Cardiac septum (tissue), 1 donor: ENCODE measurements at regions of chr14 and their contacts with region 1.

Region 1: GRCh38 chr14:60051721-60052221 is 40.0 kb upstream of the PCNX4 start:
- DNase-seq: no peak

Region 2: DNA sequence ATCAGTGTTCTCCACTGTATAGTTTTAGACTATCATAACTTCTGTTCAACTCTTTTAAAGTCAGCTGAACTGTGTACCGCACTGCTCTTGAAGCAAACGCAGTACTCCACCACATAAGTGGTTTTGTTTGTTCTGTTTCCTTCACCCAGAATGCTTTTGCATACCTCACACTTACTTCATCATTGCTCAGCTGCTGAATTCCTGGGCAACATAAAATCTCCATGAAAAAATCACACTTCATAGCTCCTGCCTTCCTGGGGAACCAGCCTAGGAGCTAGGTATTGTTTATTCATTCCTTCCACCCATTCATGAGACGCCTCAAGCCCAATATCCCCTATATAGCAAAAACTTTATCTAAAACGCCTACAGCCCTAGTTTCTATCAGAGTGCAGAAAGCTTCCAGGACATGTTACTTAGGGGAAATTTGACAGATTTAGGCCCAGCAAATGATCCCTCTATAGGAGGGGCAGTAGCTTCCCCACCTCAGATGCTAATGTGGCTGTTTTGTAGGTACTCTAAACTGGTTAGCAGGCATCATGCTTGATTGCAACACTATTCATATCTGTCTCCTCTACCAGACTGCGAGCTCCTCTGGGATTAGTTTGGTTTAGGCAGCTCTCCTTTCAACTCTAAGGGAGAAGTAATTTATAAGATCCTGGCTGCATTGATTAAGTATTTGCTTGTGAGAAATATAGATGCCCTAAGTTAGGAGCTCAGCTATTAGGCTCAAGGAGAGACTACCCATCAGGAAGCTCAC is 87.3 kb before region 1 on chr14:
- intact Hi-C with region 1: loop called (anchors 10 kb)
- DNase-seq: no peak